CD4-positive, alpha-beta memory T cell (primary cell): ENCODE measurements at regions of chrX and their contacts with region 1.

Region 1: DNA sequence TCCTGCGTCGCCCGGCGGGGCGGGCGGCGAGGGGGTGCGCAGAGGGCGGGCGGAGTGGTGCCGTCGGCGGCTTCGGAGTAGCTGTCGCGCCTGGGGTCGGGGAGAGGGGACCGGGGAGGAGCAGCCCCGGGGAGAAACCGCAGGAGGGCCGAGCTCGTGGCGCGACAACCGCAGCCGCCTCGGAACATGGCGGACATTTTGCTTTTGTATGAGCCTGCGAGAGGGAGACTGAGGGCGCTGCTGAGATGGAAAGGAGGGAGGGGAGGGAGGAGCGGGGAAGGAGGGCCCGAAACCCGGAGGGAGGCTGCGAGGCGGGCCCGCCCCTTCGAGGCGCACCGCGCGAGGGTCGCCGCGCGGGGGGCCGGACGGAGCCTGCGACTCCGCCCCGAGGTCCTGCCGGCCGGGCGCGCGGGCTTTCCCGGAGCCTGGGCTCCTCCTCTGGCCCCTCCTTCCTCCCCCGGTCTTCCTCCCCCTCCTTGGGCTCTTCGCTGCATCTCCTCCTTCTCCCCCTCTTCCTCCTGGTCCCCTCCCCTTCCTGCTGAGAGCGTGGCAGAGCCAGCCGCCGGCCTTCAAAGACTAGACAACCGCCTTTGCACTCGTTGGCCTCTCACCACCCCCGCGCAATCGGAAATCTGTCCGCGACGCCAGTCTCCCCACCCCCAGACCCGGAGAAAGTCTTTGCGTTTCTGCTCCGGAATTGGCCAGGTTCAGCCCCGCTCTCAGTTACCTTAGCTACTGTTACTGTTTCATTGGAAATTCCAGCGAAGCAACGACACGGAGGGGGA is 1.1 kb downstream of the INTS6L start:
- DNase-seq: peak; percentile 80 to 94 (median 86)
- H3K4me3 ChIP-seq: peak overlapping the region; percentile 57 to 75
- H3K4me3 Mint-ChIP-seq: peak overlapping the region; percentile 91 to 99 (median 96)
- H3K27ac ChIP-seq: peak overlapping the region; percentile 83
- H3K27ac Mint-ChIP-seq: peak overlapping the region; percentile 90 to 100 (median 98)
- H3K4me1 ChIP-seq: peaks cover 39% of the 10 kb centered on the region
- H3K4me1 Mint-ChIP-seq: peaks cover 26 to 56% (median 36%) of the 10 kb centered on the region in 4 donors
- H3K27me3 ChIP-seq: no peaks in the 10 kb centered on the region
- H3K27me3 Mint-ChIP-seq: peaks cover 0 to 2% of the 10 kb centered on the region in 2 donors

Region 2: GRCh38 chrX:134807039-134807731 is 714.4 kb before region 1 on chrX:
- CTCF ChIA-PET with region 1: no interaction called
- POLR2A ChIA-PET with region 1: no interaction called
- intact Hi-C with region 1: loop called (anchors 5 kb)
- DNase-seq: peak; percentile 81 to 95 (median 89)
- H3K4me3 ChIP-seq: peak overlapping the region; percentile 66 to 84
- H3K4me3 Mint-ChIP-seq: peak overlapping the region; percentile 91 to 98 (median 96)
- H3K27ac ChIP-seq: peak overlapping the region; percentile 88
- H3K27ac Mint-ChIP-seq: peak overlapping the region; percentile 90 to 100 (median 99)
- H3K4me1 ChIP-seq: peaks cover 27% of the 10 kb centered on the region
- H3K4me1 Mint-ChIP-seq: peaks cover 16 to 39% (median 24%) of the 10 kb centered on the region in 4 donors
- H3K27me3 ChIP-seq: no peaks in the 10 kb centered on the region
- H3K27me3 Mint-ChIP-seq: no peaks in the 10 kb centered on the region

Region 3: GRCh38 chrX:135050603-135051002 is 471.0 kb before region 1 on chrX:
- CTCF ChIA-PET with region 1: no interaction called
- POLR2A ChIA-PET with region 1: no interaction called
- intact Hi-C with region 1: loop called (anchors 1 kb)
- DNase-seq: no peak
- H3K4me3 ChIP-seq: no peak overlapping the region
- H3K4me3 Mint-ChIP-seq: peak overlapping the region; percentile 84 to 92 (median 90)
- H3K27ac ChIP-seq: no peak overlapping the region
- H3K27ac Mint-ChIP-seq: peak overlapping the region; percentile 44 to 89 (median 83)
- H3K4me1 ChIP-seq: peaks cover 13% of the 10 kb centered on the region
- H3K4me1 Mint-ChIP-seq: peaks cover 14 to 27% (median 17%) of the 10 kb centered on the region in 4 donors
- H3K27me3 ChIP-seq: no peaks in the 10 kb centered on the region
- H3K27me3 Mint-ChIP-seq: no peaks in the 10 kb centered on the region

Region 4: GRCh38 chrX:135490979-135491514 is 30.6 kb before region 1 on chrX:
- CTCF ChIA-PET with region 1: no interaction called
- POLR2A ChIA-PET with region 1: no interaction called
- intact Hi-C with region 1: no loop called
- DNase-seq: no peak
- H3K4me3 ChIP-seq: no peak overlapping the region
- H3K4me3 Mint-ChIP-seq: no peak overlapping the region
- H3K27ac ChIP-seq: no peak overlapping the region
- H3K27ac Mint-ChIP-seq: no peak overlapping the region
- H3K4me1 ChIP-seq: no peaks in the 10 kb centered on the region
- H3K4me1 Mint-ChIP-seq: peaks cover 0 to 2% (median 0%) of the 10 kb centered on the region in 4 donors
- H3K27me3 ChIP-seq: no peaks in the 10 kb centered on the region
- H3K27me3 Mint-ChIP-seq: peaks cover 0 to 1% of the 10 kb centered on the region in 2 donors

Region 5: GRCh38 chrX:135536877-135537276 is 15.3 kb after region 1 on chrX:
- CTCF ChIA-PET with region 1: interaction called, 6 read pairs
- POLR2A ChIA-PET with region 1: interaction called, 13 read pairs
- intact Hi-C with region 1: no loop called
- DNase-seq: peak in 2 of 5 donors; percentile 9
- H3K4me3 ChIP-seq: no peak overlapping the region
- H3K4me3 Mint-ChIP-seq: peak overlapping the region in 7 of 8 donors; percentile 1 to 33 (median 10)
- H3K27ac ChIP-seq: peak overlapping the region; percentile 9
- H3K27ac Mint-ChIP-seq: peak overlapping the region in 5 of 7 donors; percentile 20 to 59 (median 45)
- H3K4me1 ChIP-seq: peaks cover 44% of the 10 kb centered on the region
- H3K4me1 Mint-ChIP-seq: peaks cover 22 to 60% (median 36%) of the 10 kb centered on the region in 4 donors
- H3K27me3 ChIP-seq: no peaks in the 10 kb centered on the region
- H3K27me3 Mint-ChIP-seq: no peaks in the 10 kb centered on the region

Region 6: DNA sequence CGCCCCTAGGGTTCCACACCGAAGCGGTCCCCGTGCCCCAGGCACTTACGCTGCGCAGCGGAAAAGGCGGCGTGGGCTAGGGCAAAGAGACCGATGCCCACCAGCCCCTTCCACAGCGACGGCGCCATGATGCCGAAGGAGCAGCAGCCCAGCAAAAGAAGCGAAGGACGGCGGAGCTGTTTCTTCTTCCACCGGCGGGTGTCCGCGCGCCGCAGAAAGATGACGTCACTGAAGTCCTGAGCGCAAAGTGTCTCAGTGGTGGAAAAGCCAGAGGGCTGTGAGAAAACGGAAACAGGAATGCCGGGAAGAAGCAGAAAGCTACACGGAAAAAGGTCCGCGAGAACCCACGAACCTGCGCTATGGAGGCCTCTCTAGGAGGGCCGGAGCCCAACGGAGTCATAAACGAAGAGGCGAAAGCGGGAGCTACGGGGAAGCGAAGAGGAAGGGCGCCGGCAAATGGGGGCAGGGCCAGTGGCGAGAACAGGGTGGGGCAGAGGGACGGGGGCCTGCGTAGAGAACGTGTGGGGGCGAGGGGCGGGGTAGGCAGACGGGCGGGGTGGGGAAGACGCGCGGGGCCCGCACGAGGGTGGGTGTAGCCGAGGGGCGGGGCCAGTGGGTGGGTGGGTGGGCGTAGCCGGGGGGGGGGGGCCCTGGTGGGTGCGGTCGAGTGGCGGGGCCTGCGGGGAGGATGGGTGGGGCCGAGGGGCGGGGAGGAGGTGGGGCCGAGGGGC is 452.1 kb after region 1 on chrX and contains the start of gene MMGT1:
- CTCF ChIA-PET with region 1: no interaction called
- POLR2A ChIA-PET with region 1: interaction called, 6 read pairs
- intact Hi-C with region 1: loop called (anchors 2 kb)
- DNase-seq: peak; percentile 80 to 87 (median 85)
- H3K4me3 ChIP-seq: peak within 1 kb of the TSS; percentile 70 to 73
- H3K4me3 Mint-ChIP-seq: peak within 1 kb of the TSS; percentile 87 to 99 (median 96)
- H3K27ac ChIP-seq: peak within 1 kb of the TSS; percentile 92
- H3K27ac Mint-ChIP-seq: peak within 1 kb of the TSS; percentile 98 to 99 (median 99)
- H3K4me1 ChIP-seq: peaks cover 27% of the 10 kb centered on the region
- H3K4me1 Mint-ChIP-seq: peaks cover 18 to 52% (median 33%) of the 10 kb centered on the region in 4 donors
- H3K27me3 ChIP-seq: no peaks in the 10 kb centered on the region
- H3K27me3 Mint-ChIP-seq: no peaks in the 10 kb centered on the region
- total RNA-seq, gene MMGT1: 28.5 to 29.0 TPM

Region 7: DNA sequence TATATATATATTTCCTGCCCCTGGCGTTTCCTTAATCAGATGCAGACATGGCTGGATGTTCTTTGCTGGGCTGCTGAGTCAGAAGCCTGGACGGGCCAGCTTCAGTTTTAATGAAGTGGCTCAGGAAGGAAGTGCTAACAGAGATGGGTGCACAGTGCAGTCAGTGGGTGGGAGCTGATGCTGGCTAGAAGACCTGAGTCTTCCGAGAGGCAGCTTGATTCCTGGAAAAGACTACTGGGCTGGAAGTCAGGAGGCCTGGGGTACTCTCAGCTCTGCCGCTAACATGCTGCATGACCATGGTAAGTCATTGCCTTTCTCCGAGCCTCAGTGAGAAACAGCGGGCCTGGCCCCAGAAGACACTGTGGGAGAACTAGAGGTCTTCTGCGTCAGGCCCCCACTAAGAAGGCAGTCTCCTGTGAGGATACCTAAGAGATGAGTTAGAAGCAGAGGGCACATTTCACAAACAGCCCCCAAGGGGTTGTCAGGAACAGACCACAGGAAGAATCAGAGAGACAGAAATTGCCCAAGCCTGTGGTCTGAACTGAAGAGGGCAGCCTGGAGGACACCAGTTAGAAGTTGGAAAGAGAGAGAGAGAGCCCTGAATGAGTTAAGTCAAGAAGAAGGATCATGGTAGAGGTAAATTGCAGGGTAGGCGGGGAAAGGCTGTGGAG is 1118.0 kb after region 1 on chrX:
- CTCF ChIA-PET with region 1: no interaction called
- POLR2A ChIA-PET with region 1: no interaction called
- intact Hi-C with region 1: no loop called
- DNase-seq: peak in 1 of 5 donors; percentile 50
- H3K4me3 ChIP-seq: peak overlapping the region in 1 of 2 donors; percentile 50
- H3K4me3 Mint-ChIP-seq: peak overlapping the region; percentile 78 to 93 (median 88)
- H3K27ac ChIP-seq: peak overlapping the region; percentile 58
- H3K27ac Mint-ChIP-seq: peak overlapping the region; percentile 77 to 95 (median 93)
- H3K4me1 ChIP-seq: peaks cover 91% of the 10 kb centered on the region
- H3K4me1 Mint-ChIP-seq: peaks cover 54 to 89% (median 76%) of the 10 kb centered on the region in 4 donors
- H3K27me3 ChIP-seq: no peaks in the 10 kb centered on the region
- H3K27me3 Mint-ChIP-seq: no peaks in the 10 kb centered on the region